Caco-2 (cell line): ENCODE measurements at regions of chr9 and their contacts with region 1.

Region 1: GRCh38 chr9:114082017-114082762 is 4.1 kb upstream of the AMBP start:
- DNase-seq: peak; percentile 92 to 93
- H3K4me3 ChIP-seq: no peak overlapping the region
- H3K4me3 Mint-ChIP-seq: peak overlapping the region; percentile 31
- H3K27ac Mint-ChIP-seq: peak overlapping the region; percentile 83
- H3K4me1 ChIP-seq: peaks cover 52% of the 10 kb centered on the region
- H3K4me1 Mint-ChIP-seq: peaks cover 40% of the 10 kb centered on the region
- H3K27me3 ChIP-seq: no peaks in the 10 kb centered on the region
- H3K27me3 Mint-ChIP-seq: no peaks in the 10 kb centered on the region
- CTCF ChIP-seq: peak; percentile 77 to 94

Region 2: GRCh38 chr9:113807173-113808061 is 274.8 kb before region 1 on chr9:
- CTCF ChIA-PET with region 1: no interaction called
- POLR2A ChIA-PET with region 1: no interaction called
- intact Hi-C with region 1: loop called (anchors 2 kb)
- DNase-seq: peak; percentile 46 to 52
- H3K4me3 ChIP-seq: no peak overlapping the region
- H3K4me3 Mint-ChIP-seq: no peak overlapping the region
- H3K27ac Mint-ChIP-seq: no peak overlapping the region
- H3K4me1 ChIP-seq: no peaks in the 10 kb centered on the region
- H3K4me1 Mint-ChIP-seq: no peaks in the 10 kb centered on the region
- H3K27me3 ChIP-seq: no peaks in the 10 kb centered on the region; the same call in 1 of the 2 replicates
- H3K27me3 Mint-ChIP-seq: peaks cover 3% of the 10 kb centered on the region
- CTCF ChIP-seq: peak; percentile 78 to 89

Region 3: DNA sequence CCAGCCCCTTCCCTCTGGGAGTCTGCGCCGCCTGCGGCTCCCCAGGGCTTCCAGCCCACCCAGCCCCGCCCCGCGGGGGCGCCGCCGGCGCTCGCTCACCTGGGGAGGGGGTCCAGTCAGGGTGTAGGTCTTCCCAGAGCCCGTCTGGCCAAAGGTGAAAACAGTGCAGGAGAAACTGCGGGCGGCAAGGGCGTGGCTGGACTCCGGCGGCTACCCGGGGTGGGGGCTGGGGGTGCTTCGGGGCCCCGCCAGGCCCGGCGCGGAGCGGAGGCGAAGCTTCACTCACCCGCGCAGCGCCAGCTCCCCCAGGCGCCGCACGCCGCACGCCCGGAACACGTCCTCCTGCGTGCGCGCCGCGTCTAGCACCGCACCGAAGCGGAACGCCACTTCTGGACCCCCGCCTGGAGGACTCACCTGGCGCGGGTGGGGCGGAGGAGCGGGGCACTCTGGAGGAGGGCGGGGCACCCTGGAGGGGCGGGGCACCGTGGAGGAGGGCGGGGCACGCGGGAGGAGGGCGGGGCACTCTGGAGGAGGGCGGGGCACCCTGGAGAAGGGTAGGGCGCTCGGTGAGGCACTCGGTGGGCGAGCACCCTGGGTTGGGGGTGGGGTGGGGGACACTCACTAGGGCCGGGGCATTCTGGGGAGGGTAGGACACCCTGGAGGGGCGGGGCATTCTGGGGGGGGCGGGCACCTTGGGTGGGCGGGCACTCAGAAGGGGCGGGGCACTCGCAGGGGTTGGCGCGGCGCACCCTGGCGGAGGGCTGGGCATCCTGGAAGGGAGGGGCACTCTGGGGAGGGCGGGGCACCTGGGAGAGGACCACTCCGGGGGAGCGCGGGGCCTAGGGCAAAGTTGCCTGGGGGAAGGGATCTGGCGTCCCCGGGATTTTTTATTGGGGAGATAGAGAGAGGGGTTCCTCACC is 16.1 kb after region 1 on chr9:
- CTCF ChIA-PET with region 1: interaction called, 37 read pairs
- POLR2A ChIA-PET with region 1: interaction called, 7 read pairs
- intact Hi-C with region 1: loop called (anchors 1 kb)
- DNase-seq: peak; percentile 84 to 94
- H3K4me3 ChIP-seq: peak overlapping the region; percentile 55
- H3K4me3 Mint-ChIP-seq: peak overlapping the region; percentile 94
- H3K27ac Mint-ChIP-seq: peak overlapping the region; percentile 86
- H3K4me1 ChIP-seq: peaks cover 26% of the 10 kb centered on the region
- H3K4me1 Mint-ChIP-seq: peaks cover 19% of the 10 kb centered on the region
- H3K27me3 ChIP-seq: no peaks in the 10 kb centered on the region
- H3K27me3 Mint-ChIP-seq: no peaks in the 10 kb centered on the region
- CTCF ChIP-seq: peak in 1 of 2 experiments; percentile 31

Region 4: DNA sequence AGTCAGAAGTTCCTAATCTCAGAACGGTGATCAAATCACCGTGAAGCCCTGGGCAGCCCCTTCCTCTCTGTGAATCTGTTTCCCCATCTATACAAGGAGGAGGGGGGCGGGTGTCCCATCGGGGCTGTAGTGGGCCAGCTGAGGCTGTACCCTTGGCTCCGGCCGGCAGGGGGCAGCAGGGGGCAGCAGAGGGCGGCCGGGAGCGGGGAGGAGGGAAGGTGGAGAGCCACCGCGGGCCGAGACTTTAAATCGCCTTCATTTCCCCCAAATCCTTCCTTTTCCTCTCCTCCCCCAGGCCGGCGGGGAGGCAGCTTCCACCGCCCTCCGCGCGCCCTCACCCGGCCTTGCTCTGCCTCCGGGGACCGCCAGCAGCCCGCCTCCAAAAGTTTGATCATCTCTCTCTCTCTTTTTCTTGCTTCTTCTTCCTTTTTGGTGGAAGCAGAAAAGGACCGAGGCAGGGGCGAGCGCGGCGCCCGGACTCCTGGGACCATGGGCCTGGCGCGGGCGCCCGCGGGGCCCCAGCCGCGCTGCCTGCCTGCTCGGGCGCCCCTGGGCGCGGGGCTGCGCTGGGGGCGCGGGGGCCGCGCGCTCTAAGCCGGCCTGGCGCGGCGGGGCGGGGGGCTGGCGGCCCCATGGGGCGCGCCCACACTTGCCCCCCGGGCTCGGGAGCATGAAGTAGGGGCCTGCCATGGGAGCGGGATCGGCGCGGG is 73.2 kb after region 1 on chr9 and contains the start of gene COL27A1:
- CTCF ChIA-PET with region 1: interaction called, 23 read pairs
- POLR2A ChIA-PET with region 1: interaction called, 3 read pairs
- intact Hi-C with region 1: loop called (anchors 1 kb)
- DNase-seq: peak; percentile 82 to 93
- H3K4me3 ChIP-seq: peak within 1 kb of the TSS; percentile 81
- H3K4me3 Mint-ChIP-seq: peak within 1 kb of the TSS; percentile 78
- H3K27ac Mint-ChIP-seq: peak within 1 kb of the TSS; percentile 82
- H3K4me1 ChIP-seq: peaks cover 11% of the 10 kb centered on the region
- H3K4me1 Mint-ChIP-seq: peaks cover 13% of the 10 kb centered on the region
- H3K27me3 ChIP-seq: no peaks in the 10 kb centered on the region
- H3K27me3 Mint-ChIP-seq: no peaks in the 10 kb centered on the region
- CTCF ChIP-seq: peak; percentile 94 to 97
- total RNA-seq, gene COL27A1: 31.1 and 41.3 TPM in 2 replicates

Region 5: DNA sequence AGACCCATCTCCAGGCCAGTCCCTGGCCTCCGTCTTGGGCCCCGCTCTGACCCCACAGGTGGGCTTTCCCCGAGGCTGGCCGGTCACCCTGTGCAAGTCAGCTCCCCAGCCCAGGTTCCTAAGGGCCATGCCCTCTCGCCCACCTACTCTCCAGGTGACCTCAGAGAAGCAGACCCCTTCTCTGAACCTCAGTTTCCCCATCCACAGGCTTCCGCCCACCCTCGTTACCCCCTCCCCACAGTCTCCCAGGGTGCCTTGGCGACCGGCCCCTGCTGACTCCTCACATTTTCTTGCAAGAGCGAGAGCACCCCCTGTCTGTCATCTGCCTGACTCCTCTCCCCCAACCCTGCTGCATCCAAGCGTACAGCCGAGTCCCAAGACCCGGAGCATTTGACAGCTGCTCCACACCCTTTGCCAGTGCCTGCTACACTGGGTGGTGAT is 189.5 kb after region 1 on chr9:
- CTCF ChIA-PET with region 1: interaction called, 3 read pairs
- POLR2A ChIA-PET with region 1: no interaction called
- intact Hi-C with region 1: loop called (anchors 5 kb)
- DNase-seq: no peak
- H3K4me3 ChIP-seq: no peak overlapping the region
- H3K4me3 Mint-ChIP-seq: no peak overlapping the region
- H3K27ac Mint-ChIP-seq: no peak overlapping the region
- H3K4me1 ChIP-seq: peaks cover 16% of the 10 kb centered on the region; the same call in 1 of the 2 replicates
- H3K4me1 Mint-ChIP-seq: peaks cover 17% of the 10 kb centered on the region
- H3K27me3 ChIP-seq: no peaks in the 10 kb centered on the region
- H3K27me3 Mint-ChIP-seq: no peaks in the 10 kb centered on the region
- CTCF ChIP-seq: peak; percentile 27 to 30